BJ (cell line): ENCODE measurements at regions of chr15 and their contacts with region 1.

Region 1: DNA sequence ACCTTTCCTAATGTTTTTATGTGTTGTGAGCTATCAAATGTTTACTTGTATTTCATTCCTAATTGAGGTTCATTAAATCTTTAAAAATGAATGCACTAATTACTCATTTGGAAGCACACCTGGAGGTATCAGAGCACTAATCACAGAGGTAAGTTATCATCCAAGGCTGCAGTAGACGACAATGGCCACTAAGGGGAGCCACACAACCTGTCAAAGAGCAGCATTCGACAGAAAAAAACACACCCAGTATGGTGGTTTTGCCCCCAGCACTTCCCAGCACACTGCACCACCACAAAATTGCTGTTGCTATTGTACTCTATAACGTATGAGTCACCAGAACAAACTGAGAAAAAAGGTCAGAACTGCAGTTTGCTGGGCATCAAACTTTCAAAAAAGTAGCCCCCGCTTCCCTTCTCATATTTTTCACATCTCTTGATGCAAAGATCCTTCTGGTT is 205.9 kb upstream of the IGF1R start:
- DNase-seq: peak; percentile 57
- H3K4me3 ChIP-seq: no peak overlapping the region
- H3K27me3 ChIP-seq: peaks cover 5% of the 10 kb centered on the region
- CTCF ChIP-seq: peak; percentile 84

Region 2: GRCh38 chr15:98428253-98428989 is 14.0 kb before region 1 on chr15:
- CTCF ChIA-PET with region 1: interaction called, 20 read pairs
- POLR2A ChIA-PET with region 1: interaction called, 3 read pairs
- DNase-seq: peak; percentile 9
- H3K4me3 ChIP-seq: peak overlapping the region; percentile 40
- H3K27me3 ChIP-seq: peaks cover 3% of the 10 kb centered on the region
- CTCF ChIP-seq: peak; percentile 78

Region 3: GRCh38 chr15:98455965-98456364 is 13.6 kb after region 1 on chr15:
- CTCF ChIA-PET with region 1: interaction called, 12 read pairs
- POLR2A ChIA-PET with region 1: no interaction called
- DNase-seq: no peak
- H3K4me3 ChIP-seq: no peak overlapping the region
- H3K27me3 ChIP-seq: no peaks in the 10 kb centered on the region
- CTCF ChIP-seq: no peak